Heart right ventricle (tissue), 16 donors: ENCODE measurements at regions of chr9 and their contacts with region 1.

Region 1: GRCh38 chr9:106862825-106863720 is at the start of gene ZNF462:
- DNase-seq: peak; percentile 30 to 44
- ATAC-seq: peak; percentile 36 to 76 (median 51)
- H3K4me3 ChIP-seq: peak within 1 kb of the TSS; percentile 58 to 87 (median 70)
- H3K27ac ChIP-seq: peak within 1 kb of the TSS; percentile 75 to 92 (median 90)
- H3K4me1 ChIP-seq: peaks cover 2 to 45% (median 29%) of the 10 kb centered on the region in 9 donors
- H3K27me3 ChIP-seq: peaks cover 0 to 63% (median 0%) of the 10 kb centered on the region in 7 donors
- CTCF ChIP-seq: peak in 5 of 9 donors; percentile 18 to 53 (median 47)
- total RNA-seq, gene ZNF462: 24.4 to 47.7 (median 34.6) TPM

Region 2: GRCh38 chr9:105901514-105902109 is 961.5 kb before region 1 on chr9:
- intact Hi-C with region 1: loop called in 1 of 10 experiments (anchors 10 kb)
- DNase-seq: peak; percentile 13 to 29
- ATAC-seq: peak; percentile 76 to 97 (median 95)
- H3K4me3 ChIP-seq: no peak overlapping the region
- H3K27ac ChIP-seq: no peak overlapping the region
- H3K4me1 ChIP-seq: peaks cover 0 to 4% (median 0%) of the 10 kb centered on the region in 9 donors
- H3K27me3 ChIP-seq: no peaks in the 10 kb centered on the region
- CTCF ChIP-seq: peak; percentile 23 to 81 (median 77)

Region 3: DNA sequence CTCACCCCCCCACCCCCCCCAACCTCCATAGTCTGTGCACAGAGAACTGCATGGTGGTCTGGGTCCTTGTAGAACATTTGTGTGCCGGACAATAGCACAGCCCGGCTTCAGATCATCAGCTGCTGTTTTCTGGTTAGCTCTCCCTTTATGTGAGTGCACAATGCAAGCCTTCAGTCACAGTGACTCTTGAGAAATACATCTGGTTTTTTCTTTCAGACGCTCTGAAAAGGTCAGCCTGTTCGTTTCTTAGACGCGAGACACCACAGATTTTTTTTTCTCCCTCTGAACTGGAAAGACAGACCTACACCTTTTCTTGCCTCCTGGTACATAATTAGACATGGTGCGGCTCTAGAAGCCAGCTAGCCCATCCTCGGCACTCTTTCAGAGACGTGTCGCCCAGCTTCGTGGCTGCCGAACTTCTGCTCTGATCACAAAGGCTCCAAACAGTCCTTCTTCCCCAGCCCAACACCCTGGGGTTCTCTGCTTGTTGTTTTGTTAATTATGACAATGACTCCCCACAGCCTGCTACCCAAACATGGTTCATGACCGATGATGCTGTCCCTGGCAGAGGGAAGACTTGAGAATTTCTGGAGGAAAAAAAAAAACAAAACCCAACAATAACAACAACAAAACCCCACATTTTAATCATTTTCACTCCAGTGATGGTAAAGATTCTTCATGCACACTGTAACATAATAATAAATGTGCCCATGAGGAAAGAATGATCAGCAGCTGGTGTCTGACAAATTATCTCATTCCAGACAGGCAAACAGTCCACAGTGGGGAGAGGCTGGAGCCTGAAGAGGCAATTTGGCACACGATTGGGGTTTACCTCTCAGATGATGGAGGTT is 241.5 kb before region 1 on chr9:
- intact Hi-C with region 1: loop called in 1 of 10 experiments (anchors 10 kb)
- DNase-seq: no peak
- ATAC-seq: no peak
- H3K4me3 ChIP-seq: no peak overlapping the region
- H3K27ac ChIP-seq: no peak overlapping the region
- H3K4me1 ChIP-seq: peaks cover 0 to 21% (median 4%) of the 10 kb centered on the region in 9 donors
- H3K27me3 ChIP-seq: no peaks in the 10 kb centered on the region
- CTCF ChIP-seq: no peak

Region 4: GRCh38 chr9:106784076-106784475 is 79.0 kb before region 1 on chr9:
- intact Hi-C with region 1: no loop called
- DNase-seq: no peak
- ATAC-seq: no peak
- H3K4me3 ChIP-seq: no peak overlapping the region
- H3K27ac ChIP-seq: no peak overlapping the region
- H3K4me1 ChIP-seq: no peaks in the 10 kb centered on the region
- H3K27me3 ChIP-seq: no peaks in the 10 kb centered on the region
- CTCF ChIP-seq: no peak

Region 5: DNA sequence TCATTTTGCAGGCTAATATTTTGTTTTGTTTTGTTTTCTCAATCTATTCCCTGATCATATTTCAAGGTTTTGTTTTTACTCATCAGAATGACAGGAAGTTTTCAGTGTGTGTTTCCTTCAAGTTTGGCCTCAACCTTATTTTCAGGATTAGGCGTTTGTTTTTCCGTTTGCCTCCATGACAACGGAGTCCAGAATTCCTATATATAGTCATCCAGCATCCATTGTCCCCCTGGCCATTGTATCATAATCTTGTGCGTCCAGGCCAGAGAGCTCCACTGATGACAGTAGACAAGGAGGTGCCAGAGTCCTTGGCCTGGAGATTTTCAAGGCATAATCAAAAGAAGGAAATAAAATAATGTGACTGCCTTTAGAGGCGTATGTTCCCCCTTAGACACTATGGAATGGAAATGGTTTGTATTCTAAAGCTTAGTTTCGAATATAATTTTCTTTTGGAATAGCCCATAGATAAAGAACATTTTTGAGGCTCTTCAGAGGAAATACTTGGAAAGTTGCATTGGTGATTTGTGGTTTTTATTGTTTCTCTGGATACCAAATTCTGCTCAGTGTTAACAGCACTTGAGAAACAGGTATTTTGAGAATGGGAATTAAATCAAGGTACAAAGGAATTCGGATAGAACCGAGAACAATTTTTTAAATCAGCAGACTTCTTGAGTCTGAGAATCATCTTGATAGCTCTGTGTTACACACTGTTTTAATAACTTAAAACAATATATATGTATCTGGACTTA is 99.7 kb after region 1 on chr9:
- intact Hi-C with region 1: loop called in 6 of 10 experiments (anchors 5 to 10 kb)
- DNase-seq: peak; percentile 13 to 83
- ATAC-seq: peak; percentile 83 to 98 (median 94)
- H3K4me3 ChIP-seq: no peak overlapping the region
- H3K27ac ChIP-seq: peak overlapping the region in 9 of 10 donors; percentile 56 to 81 (median 73)
- H3K4me1 ChIP-seq: peaks cover 0 to 71% (median 29%) of the 10 kb centered on the region in 9 donors
- H3K27me3 ChIP-seq: no peaks in the 10 kb centered on the region
- CTCF ChIP-seq: no peak

Region 6: GRCh38 chr9:107172160-107172978 is 309.3 kb after region 1 on chr9:
- intact Hi-C with region 1: loop called in 2 of 10 experiments (anchors 5 to 10 kb)
- DNase-seq: peak; percentile 60 to 72
- ATAC-seq: peak in 7 of 8 donors; percentile 52 to 72 (median 63)
- H3K4me3 ChIP-seq: no peak overlapping the region
- H3K27ac ChIP-seq: no peak overlapping the region
- H3K4me1 ChIP-seq: peaks cover 3 to 30% (median 24%) of the 10 kb centered on the region in 9 donors
- H3K27me3 ChIP-seq: no peaks in the 10 kb centered on the region
- CTCF ChIP-seq: peak; percentile 85 to 96 (median 92)